Left cardiac atrium (tissue), 4 donors: ENCODE measurements at regions of chrX and their contacts with region 1.

Region 1: DNA sequence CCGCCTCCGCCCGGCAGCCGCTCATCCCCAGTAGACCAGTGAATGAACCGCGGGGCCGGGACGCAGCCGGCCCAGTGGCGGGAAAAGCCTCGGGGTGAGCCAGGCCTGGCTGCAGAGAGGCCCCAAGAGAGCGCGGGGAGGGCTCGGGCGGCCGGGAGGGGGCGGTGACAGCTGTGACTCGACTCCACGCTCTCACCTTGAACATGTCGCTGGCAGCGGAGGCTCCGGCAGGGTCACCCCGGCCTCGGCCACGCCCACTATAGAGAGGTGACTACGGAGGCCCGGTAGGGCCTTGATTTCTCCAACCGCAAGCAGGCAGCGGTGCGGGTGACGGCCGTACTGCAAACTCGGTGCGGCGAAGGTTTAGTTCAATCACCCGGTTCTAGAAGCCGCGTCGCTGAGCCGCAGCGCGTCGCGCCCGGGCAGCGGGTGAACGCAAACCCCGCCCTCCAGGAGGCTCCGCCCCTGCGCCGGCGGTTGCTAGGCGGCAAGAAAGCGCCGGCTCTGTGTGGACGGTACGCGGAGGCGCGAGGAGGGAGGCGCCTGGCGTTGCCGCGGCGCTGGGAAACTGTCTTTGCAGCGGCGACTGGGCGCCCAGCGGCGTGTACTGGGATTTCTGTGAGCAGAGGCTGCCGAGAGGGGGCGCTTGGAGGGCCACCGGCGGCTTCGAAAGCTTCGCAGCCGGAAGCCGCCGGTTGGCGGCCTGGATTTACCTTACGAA is at the starts of genes APOO and CXorf58:
- DNase-seq: peak; percentile 92
- ATAC-seq: peak; percentile 97 to 99
- total RNA-seq, gene APOO: 70.0 to 70.9 TPM
- total RNA-seq, gene CXorf58: 0.42 TPM in 1 of 2 donors, not detected in the other

Region 2: GRCh38 chrX:23742697-23743622 is 164.7 kb before region 1 on chrX and contains the start of gene ACOT9:
- intact Hi-C with region 1: loop called in 1 of 2 experiments (anchors 10 kb)
- DNase-seq: peak; percentile 96
- ATAC-seq: peak; percentile 97 to 98
- total RNA-seq, gene ACOT9: 42.4 to 50.6 TPM

Region 3: DNA sequence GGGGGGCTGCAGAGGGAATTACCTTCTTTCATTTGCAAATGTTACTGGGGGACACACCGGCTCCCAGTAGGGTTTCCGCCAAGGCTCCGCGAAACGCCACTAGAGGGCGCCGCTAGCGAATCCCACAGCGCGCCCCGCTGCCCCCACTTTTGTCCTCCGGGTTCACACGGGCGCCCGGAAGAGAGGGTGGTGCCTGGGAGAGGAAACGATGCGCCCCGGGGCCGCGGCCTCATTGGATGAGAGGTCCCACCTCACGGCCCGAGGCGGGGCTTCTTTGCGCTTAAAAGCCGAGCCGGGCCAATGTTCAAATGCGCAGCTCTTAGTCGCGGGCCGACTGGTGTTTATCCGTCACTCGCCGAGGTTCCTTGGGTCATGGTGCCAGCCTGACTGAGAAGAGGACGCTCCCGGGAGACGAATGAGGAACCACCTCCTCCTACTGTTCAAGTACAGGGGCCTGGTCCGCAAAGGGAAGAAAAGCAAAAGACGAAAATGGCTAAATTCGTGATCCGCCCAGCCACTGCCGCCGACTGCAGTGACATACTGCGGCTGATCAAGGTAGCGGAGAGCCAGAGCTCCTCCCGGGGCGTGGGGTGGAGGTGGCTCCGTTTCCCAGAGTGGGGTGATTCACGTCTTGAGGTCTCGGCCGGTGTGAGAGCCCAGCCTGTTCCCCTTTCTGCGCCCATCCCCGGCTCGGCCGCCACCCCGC is 124.6 kb before region 1 on chrX and contains the start of gene SAT1:
- intact Hi-C with region 1: loop called in 1 of 2 experiments (anchors 10 kb)
- DNase-seq: peak; percentile 96
- ATAC-seq: peak; percentile 95 to 96
- total RNA-seq, gene SAT1: 291 to 408 TPM

Region 4: DNA sequence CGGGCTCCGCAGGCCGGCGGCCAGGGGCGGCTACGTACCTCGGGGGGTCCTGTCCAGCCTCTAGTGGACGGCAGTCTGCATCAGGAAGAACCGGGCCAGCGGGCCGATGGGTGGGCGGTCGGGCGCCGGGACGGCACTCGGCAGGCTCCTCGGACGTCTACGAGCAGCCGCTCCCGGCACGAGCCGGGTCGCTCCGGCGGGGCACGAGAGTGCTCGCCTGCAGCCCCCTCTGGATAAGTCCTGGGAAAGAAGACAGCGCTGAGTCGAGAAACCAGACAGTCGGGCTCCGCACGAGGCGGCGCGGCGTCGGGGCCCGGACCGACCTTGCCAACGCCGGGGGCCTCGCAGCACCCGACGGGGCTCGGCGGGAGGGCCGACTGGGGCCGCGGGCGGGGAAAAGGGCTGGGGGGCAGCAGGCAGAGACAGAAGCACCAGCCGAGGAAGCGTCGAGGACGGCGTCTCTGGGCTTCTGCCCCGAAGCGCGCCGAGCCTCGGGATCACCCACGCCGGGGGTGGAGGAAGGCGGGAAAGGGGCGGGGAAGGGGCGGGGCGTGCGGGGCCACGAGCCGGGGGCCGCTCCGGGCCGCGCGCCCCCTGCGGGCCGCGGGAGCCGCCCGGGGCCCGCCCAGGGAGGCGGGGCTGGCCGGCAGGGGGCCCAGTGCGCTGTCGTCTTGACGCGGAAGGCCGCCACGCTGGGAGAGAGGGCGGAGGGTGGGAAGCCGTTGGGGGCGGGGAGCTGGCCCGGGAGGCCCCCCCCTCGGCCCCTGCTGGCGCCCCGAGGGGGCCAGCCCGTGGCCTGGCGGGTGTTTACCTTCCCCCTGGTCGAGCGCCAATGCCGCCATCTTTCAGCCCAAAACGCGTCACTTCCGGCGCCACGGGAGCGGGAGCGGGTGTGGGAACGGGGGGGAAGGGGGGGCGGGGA is 117.4 kb after region 1 on chrX:
- intact Hi-C with region 1: loop called in 1 of 2 experiments (anchors 5 kb)
- DNase-seq: peak; percentile 90
- ATAC-seq: peak; percentile 94 to 96

Region 5: DNA sequence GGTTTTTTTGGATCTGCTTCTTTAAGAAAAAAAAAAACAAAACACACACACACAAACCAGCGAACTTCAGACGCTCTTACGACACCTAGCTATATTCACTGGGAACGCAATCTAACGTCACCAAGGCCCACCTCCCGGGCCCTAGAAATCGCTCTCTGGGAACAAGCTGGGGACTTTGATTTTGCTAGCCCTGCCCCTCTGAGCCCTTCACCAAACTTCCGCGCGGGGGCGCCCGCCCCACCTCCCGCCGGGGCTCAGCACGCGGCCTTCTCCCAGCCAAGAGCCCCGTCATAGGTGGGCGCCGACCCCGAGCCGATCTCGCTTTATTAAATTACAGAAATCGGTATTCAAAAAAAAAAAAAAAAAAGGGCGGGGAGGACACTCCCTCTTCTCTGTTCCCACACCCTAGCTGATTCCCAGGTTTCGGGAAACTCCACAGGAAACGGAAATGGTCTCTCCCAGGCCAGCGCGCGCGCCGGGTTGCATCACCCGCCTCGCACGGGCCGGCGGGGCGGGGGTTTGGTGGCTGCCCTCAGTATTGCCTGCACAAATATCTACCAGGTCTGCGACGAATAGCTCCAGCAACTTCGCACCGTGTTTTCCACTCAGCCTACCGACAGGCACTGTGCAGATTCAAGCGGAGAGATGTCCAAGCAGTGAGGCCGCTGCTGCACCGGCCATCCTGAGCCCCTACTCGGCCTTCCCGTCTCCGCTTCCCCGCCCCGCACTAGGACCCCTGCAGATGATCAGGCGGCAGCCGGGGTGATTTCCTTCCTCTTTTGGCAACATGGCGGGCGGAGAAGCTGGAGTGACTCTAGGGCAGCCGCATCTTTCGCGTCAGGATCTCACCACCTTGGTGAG is 146.8 kb after region 1 on chrX and contains the start of gene EIF2S3:
- intact Hi-C with region 1: loop called in 1 of 2 experiments (anchors 10 kb)
- DNase-seq: peak; percentile 91
- ATAC-seq: peak; percentile 97 to 98
- total RNA-seq, gene EIF2S3: 69.7 to 98.0 TPM

Region 6: DNA sequence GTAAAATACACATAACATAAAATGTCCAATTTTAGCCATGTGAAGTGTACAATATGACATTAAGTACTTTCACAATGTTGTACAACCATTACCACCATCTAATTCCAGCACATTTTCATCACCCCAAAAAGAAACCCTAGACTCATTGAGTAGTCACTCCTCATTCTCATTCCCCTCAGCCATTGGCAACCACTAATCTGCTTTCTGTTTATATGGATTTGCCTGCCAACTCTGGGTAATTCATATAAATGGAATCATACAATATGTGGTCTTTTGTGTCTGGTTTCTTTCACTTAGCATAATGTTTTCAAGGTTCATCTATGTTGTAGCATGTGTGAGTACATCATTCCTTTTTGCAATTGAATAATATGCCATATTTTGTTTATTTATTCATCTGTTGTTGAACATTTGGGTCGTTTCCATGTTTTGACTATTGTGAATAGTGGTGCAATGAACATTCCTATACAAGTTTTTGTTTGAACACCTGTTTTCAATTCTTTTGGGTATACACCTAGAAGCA is 190.1 kb after region 1 on chrX:
- intact Hi-C with region 1: no loop called
- DNase-seq: no peak
- ATAC-seq: no peak